Activated CD4-positive, alpha-beta T cell treated with anti-CD3 and anti-CD28 coated beads for 36 hours (primary cell): ENCODE measurements at regions of chr7 and their contacts with region 1.

Region 1: DNA sequence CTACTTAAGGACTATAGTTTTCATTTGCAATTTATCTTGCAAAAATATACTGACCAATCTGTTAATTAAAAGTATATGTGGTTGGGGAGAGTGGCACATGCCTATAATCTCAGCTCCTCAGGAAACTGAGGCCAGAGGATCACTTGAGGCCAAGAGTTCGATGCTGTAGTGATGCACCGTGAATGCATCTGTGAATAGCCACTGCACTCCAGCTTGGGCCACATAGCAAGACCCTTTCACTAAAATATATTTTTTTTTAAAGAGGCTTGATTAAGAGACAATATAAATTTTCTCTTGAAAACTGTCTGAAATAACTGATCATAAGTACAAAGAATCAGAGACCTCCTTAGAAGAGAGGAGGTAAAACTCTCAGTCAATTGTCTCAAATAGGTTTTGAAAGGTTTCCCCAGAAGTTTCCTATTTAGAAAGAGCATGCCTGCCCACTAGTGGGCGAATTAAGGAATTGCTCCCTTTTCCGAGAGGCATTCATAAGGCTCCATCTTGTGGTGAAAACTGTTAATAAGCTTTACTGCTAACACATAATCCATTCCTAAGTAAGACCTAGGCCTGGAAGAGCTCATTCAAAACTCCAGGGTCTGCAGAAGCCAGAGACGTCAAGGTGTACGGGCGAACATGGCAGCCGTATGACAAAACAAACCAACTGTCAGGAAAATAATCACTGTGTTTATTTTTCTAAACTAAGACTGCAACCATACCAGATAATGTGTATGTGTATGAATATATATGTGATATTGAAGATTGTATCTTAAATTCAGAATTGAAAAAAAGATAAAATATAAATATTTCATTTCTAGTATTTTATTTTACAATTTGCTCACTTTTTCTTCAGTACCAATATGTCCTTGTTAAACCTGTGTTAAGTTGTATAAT is 6.8 kb upstream of the TAS2R40 start:
- DNase-seq: peak; percentile 70
- ATAC-seq: peak; percentile 89
- H3K4me3 Mint-ChIP-seq: no peak overlapping the region
- H3K27ac Mint-ChIP-seq: no peak overlapping the region
- H3K4me1 Mint-ChIP-seq: no peaks in the 10 kb centered on the region
- H3K27me3 Mint-ChIP-seq: peaks cover 2% of the 10 kb centered on the region

Region 2: GRCh38 chr7:142301923-142302550 is 913.0 kb before region 1 on chr7:
- CTCF ChIA-PET with region 1: interaction called, 7 read pairs
- POLR2A ChIA-PET with region 1: no interaction called
- intact Hi-C with region 1: loop called in 1 of 2 experiments (anchors 10 kb)
- DNase-seq: no peak
- ATAC-seq: no peak
- H3K4me3 Mint-ChIP-seq: no peak overlapping the region
- H3K27ac Mint-ChIP-seq: no peak overlapping the region
- H3K4me1 Mint-ChIP-seq: peaks cover 29% of the 10 kb centered on the region
- H3K27me3 Mint-ChIP-seq: peaks cover 8% of the 10 kb centered on the region

Region 3: DNA sequence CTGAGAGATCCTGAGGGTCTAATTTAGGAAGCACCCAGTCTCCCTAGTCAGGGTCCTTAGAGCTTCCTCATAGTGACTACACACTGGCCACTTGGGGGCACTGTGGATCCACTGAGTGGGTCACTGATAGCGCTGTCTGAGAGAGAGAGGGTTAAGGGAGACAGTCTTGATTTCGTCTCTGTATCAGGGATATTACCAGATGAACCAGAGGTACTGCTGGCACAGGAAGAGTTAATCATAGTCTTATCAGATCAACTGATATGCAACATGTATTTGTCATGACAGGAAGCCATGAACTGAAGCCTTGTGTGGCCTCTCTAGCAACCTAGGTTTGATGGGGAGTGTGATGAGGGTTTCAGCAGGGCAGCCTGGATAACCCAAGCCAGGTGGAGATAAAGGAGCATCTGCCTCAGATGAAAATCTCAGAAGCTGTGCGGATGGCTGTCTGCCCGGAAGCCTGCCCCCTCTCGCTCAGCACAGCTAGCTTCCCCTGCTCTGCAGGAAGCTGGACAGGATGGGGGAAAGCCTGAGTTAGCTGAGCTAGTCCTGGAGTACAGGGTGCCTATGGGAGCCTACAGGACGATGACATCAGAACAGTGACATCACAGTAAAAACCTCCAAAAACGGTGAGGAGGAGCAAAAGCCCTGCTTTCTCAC is 679.8 kb before region 1 on chr7:
- CTCF ChIA-PET with region 1: interaction called, 7 read pairs
- POLR2A ChIA-PET with region 1: no interaction called
- intact Hi-C with region 1: loop called in 1 of 2 experiments (anchors 10 kb)
- DNase-seq: peak; percentile 90
- ATAC-seq: peak; percentile 87
- H3K4me3 Mint-ChIP-seq: peak overlapping the region; percentile 63
- H3K27ac Mint-ChIP-seq: peak overlapping the region; percentile 77
- H3K4me1 Mint-ChIP-seq: peaks cover 30% of the 10 kb centered on the region
- H3K27me3 Mint-ChIP-seq: no peaks in the 10 kb centered on the region

Region 4: DNA sequence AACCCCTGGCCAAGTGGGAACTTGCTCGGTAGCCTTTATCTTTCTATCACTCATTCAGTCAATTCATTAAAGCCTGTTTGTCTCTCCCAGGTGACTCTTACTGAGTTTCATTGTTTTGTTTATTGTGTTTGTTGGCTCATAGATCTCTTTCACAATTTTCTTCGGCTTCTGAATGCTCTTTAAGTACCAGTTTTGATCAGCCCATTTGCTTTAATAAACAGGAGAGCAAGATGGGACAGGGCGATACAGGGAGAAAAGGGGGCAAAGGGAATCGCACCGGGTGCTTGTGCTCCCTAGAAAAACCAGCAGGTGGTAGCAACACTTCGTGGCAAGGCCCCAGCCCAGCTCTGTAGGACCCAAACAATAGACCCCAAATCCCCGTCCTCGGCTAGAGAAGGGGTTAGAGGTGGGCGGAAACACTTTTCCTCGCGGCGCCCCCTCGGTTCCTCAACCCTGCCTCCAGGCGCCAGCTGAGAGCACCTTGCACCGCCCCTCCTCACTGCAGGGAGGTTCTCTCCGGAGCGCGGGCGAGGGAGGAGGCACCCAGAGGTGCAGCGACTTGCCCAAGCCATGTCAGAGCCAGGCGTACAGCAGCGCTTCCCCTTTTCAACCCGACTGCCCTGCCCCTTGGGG is 361.2 kb before region 1 on chr7:
- CTCF ChIA-PET with region 1: interaction called, 4 read pairs
- POLR2A ChIA-PET with region 1: no interaction called
- intact Hi-C with region 1: loop called in 1 of 2 experiments (anchors 5 kb)
- DNase-seq: peak; percentile 85
- ATAC-seq: peak; percentile 88
- H3K4me3 Mint-ChIP-seq: peak overlapping the region; percentile 96
- H3K27ac Mint-ChIP-seq: peak overlapping the region; percentile 78
- H3K4me1 Mint-ChIP-seq: peaks cover 27% of the 10 kb centered on the region
- H3K27me3 Mint-ChIP-seq: peaks cover 2% of the 10 kb centered on the region

Region 5: GRCh38 chr7:143002106-143002505 is 212.9 kb before region 1 on chr7:
- CTCF ChIA-PET with region 1: interaction called, 247 read pairs
- POLR2A ChIA-PET with region 1: no interaction called
- intact Hi-C with region 1: loop called in 1 of 2 experiments (anchors 1 kb)
- DNase-seq: no peak
- ATAC-seq: no peak
- H3K4me3 Mint-ChIP-seq: no peak overlapping the region
- H3K27ac Mint-ChIP-seq: no peak overlapping the region
- H3K4me1 Mint-ChIP-seq: peaks cover 5% of the 10 kb centered on the region
- H3K27me3 Mint-ChIP-seq: no peaks in the 10 kb centered on the region

Region 6: GRCh38 chr7:143240291-143241168 is 25.5 kb after region 1 on chr7:
- CTCF ChIA-PET with region 1: interaction called, 16 read pairs
- POLR2A ChIA-PET with region 1: interaction called, 3 read pairs
- intact Hi-C with region 1: no loop called
- DNase-seq: peak; percentile 80
- ATAC-seq: peak; percentile 73
- H3K4me3 Mint-ChIP-seq: no peak overlapping the region
- H3K27ac Mint-ChIP-seq: peak overlapping the region; percentile 51
- H3K4me1 Mint-ChIP-seq: peaks cover 28% of the 10 kb centered on the region
- H3K27me3 Mint-ChIP-seq: peaks cover 7% of the 10 kb centered on the region

Region 7: DNA sequence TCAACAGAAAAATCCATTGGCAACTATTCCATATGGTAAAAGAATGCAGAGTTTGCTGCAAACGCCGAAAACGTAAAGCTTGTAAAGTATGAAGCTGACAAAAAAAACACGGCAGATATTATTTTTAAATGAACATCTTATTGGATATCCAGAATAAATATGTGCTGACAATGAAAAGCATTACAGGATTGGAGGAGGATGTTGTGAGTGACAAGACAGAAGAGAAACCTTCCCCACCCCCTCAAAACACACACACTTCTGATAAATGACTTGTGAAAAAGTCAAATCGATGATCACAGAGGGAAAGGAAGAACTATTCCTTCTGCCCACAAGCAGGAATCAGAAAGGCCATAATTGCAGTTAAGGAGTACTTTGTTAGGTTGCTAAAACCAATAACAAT is 132.9 kb after region 1 on chr7:
- CTCF ChIA-PET with region 1: no interaction called
- POLR2A ChIA-PET with region 1: no interaction called
- intact Hi-C with region 1: no loop called
- DNase-seq: no peak
- ATAC-seq: no peak
- H3K4me3 Mint-ChIP-seq: no peak overlapping the region
- H3K27ac Mint-ChIP-seq: no peak overlapping the region
- H3K4me1 Mint-ChIP-seq: peaks cover 8% of the 10 kb centered on the region
- H3K27me3 Mint-ChIP-seq: peaks cover 6% of the 10 kb centered on the region

Region 8: GRCh38 chr7:144674550-144674949 is 1459.5 kb after region 1 on chr7:
- CTCF ChIA-PET with region 1: no interaction called
- POLR2A ChIA-PET with region 1: no interaction called
- intact Hi-C with region 1: no loop called
- DNase-seq: no peak
- ATAC-seq: no peak
- H3K4me3 Mint-ChIP-seq: no peak overlapping the region
- H3K27ac Mint-ChIP-seq: no peak overlapping the region
- H3K4me1 Mint-ChIP-seq: no peaks in the 10 kb centered on the region
- H3K27me3 Mint-ChIP-seq: no peaks in the 10 kb centered on the region